ENCODE measurements at regions of chr12 and their contacts with region 1.

Region 1: GRCh38 chr12:119176267-119176849 is 2.4 kb upstream of the HSPB8 start:
- DNase-seq: peak; percentile 96 to 98
- ATAC-seq: peak; percentile 84
- H3K4me3 ChIP-seq: peak overlapping the region; percentile 42 to 69
- H3K27ac ChIP-seq: peak overlapping the region; percentile 85 to 98
- H3K4me1 ChIP-seq: no peaks in the 10 kb centered on the region
- H3K27me3 ChIP-seq: no peaks in the 10 kb centered on the region

Region 2: GRCh38 chr12:118372541-118373495 is 803.5 kb before region 1 on chr12 and contains the start of gene TAOK3:
- intact Hi-C with region 1: loop called in 1 of 2 experiments (anchors 5 kb)
- DNase-seq: peak; percentile 99
- ATAC-seq: peak; percentile 98
- H3K4me3 ChIP-seq: peak within 1 kb of the TSS; percentile 73 to 95
- H3K27ac ChIP-seq: peak within 1 kb of the TSS in 1 of 2 donors; percentile 69
- H3K4me1 ChIP-seq: no peaks in the 10 kb centered on the region
- H3K27me3 ChIP-seq: no peaks in the 10 kb centered on the region
- total RNA-seq, gene TAOK3: 31.1 to 45.4 TPM

Region 3: GRCh38 chr12:119115296-119115905 is 61.0 kb before region 1 on chr12:
- intact Hi-C with region 1: loop called (anchors 5 to 10 kb)
- DNase-seq: no peak
- ATAC-seq: peak; percentile 56
- H3K4me3 ChIP-seq: no peak overlapping the region
- H3K27ac ChIP-seq: no peak overlapping the region
- H3K4me1 ChIP-seq: no peaks in the 10 kb centered on the region
- H3K27me3 ChIP-seq: no peaks in the 10 kb centered on the region

Region 4: GRCh38 chr12:119130523-119130922 is 45.8 kb before region 1 on chr12:
- intact Hi-C with region 1: no loop called
- DNase-seq: no peak
- ATAC-seq: no peak
- H3K4me3 ChIP-seq: no peak overlapping the region
- H3K27ac ChIP-seq: no peak overlapping the region
- H3K4me1 ChIP-seq: no peaks in the 10 kb centered on the region
- H3K27me3 ChIP-seq: no peaks in the 10 kb centered on the region

Region 5: GRCh38 chr12:119147847-119148448 is 28.4 kb before region 1 on chr12:
- intact Hi-C with region 1: loop called in 1 of 2 experiments (anchors 5 kb)
- DNase-seq: no peak
- ATAC-seq: no peak
- H3K4me3 ChIP-seq: no peak overlapping the region
- H3K27ac ChIP-seq: no peak overlapping the region
- H3K4me1 ChIP-seq: no peaks in the 10 kb centered on the region
- H3K27me3 ChIP-seq: no peaks in the 10 kb centered on the region

Region 6: DNA sequence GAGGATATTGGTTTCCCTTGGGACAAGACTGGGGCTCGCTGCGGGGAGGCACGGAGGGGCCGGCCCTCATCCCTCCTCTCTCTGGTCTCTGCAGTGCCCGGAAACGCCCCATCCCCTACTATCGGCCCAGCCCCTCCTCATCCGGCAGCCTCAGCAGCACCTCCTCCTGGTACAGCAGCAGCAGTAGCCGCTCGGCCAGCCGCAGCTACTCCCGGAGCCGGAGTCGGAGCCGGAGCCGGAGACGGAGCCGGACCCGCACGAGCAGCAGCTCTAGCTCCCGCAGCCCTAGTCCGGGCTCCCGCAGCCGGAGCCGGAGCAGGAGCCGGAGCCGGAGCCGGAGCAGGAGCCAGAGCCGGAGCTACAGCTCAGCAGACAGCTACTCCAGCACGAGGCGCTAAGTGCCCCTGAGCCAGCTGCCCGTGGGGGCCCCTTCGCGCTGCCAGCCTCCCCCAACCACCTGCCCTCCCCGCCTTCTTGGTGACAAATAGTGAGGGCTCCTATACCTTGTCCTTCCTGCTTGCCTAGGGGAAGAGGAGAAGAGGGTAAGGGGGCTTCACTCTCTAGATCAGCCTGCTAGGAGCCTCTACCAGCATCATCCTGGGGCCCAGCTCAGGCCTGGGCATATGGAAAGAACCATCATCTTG is 19.8 kb before region 1 on chr12:
- intact Hi-C with region 1: loop called (anchors 1 to 2 kb)
- DNase-seq: peak; percentile 56 to 81
- ATAC-seq: peak; percentile 11
- H3K4me3 ChIP-seq: no peak overlapping the region
- H3K27ac ChIP-seq: peak overlapping the region; percentile 88 to 95
- H3K4me1 ChIP-seq: peaks cover 5 to 6% of the 10 kb centered on the region in 2 donors
- H3K27me3 ChIP-seq: no peaks in the 10 kb centered on the region

Region 7: GRCh38 chr12:119249326-119250155 is 73.2 kb after region 1 on chr12:
- intact Hi-C with region 1: loop called in 1 of 2 experiments (anchors 10 kb)
- DNase-seq: no peak
- ATAC-seq: no peak
- H3K4me3 ChIP-seq: no peak overlapping the region
- H3K27ac ChIP-seq: no peak overlapping the region
- H3K4me1 ChIP-seq: peaks cover 2 to 5% of the 10 kb centered on the region in 2 donors
- H3K27me3 ChIP-seq: no peaks in the 10 kb centered on the region

Region 8: DNA sequence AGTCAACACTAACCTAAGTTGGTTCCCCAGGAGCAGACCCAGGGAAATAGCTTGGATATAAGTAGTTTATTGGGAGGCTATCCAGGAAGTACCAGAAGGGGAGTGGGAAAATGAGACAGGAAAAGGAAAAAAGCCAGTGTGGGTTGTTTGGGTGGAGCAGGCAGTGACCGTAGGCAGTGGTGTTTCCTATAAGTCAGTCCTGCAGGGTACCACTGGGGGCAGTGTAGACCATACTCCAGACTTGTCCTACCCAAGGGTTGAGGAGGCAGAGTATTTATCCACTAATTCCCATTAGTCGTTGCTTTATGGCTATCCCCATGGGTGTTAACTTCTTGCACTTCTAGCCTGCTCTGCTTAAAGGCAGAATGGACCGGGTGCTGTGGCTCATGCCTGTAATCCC is 151.8 kb after region 1 on chr12:
- intact Hi-C with region 1: loop called in 1 of 2 experiments (anchors 10 kb)
- DNase-seq: no peak
- ATAC-seq: no peak
- H3K4me3 ChIP-seq: no peak overlapping the region
- H3K27ac ChIP-seq: no peak overlapping the region
- H3K4me1 ChIP-seq: peaks cover 0 to 10% of the 10 kb centered on the region in 2 donors
- H3K27me3 ChIP-seq: no peaks in the 10 kb centered on the region

Measured in aorta (tissue), 5 donors.